ENCODE measurements at regions of chr2 and their contacts with region 1.

Region 1: DNA sequence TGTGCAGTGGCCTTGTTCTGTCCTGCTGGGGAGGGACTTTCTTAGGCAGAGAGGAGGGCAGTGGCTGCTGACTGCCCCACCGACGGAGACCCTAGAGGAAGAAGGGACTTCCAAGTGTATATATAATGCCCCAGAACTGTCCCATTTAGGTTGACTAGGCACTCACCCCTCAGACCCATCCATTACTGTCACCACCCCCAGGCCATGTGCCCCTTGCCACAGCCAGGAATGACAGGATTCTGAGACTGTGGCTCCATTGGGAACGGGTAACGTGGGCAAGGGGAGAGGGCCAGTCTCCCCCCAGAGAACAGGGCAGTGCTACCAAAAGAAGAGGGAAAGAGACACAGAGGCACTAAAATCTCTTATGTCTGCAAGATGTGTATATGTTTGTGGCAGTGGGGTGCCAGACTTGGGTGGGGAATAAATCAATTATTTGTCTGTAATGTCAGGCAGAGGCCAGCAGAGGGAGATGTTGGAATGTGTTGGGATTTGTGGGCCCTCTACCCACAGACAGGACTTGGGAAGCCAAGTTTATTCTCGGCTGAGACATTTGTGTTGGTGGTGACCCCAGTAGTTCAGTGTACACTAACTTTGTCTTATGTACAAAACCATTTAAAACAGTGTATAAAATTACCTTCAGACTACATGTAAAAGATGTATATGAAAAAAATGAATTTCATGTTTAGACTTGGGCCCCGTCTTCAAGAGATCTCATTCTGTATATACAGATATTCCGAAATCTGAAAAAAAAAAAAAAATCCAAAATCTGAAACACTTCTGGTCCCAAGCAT is 24.0 kb upstream of the TMEM37 start:
- DNase-seq: peak in 3 of 5 donors; percentile 28 to 55 (median 49)
- ATAC-seq: peak; percentile 32 to 78 (median 68)
- H3K4me3 ChIP-seq: no peak overlapping the region
- H3K27ac ChIP-seq: no peak overlapping the region
- H3K4me1 ChIP-seq: peaks cover 0 to 11% (median 6%) of the 10 kb centered on the region in 12 donors
- H3K27me3 ChIP-seq: no peaks in the 10 kb centered on the region
- CTCF ChIP-seq: peak; percentile 60 to 85 (median 79)
- POLR2A ChIP-seq: no peak

Region 2: DNA sequence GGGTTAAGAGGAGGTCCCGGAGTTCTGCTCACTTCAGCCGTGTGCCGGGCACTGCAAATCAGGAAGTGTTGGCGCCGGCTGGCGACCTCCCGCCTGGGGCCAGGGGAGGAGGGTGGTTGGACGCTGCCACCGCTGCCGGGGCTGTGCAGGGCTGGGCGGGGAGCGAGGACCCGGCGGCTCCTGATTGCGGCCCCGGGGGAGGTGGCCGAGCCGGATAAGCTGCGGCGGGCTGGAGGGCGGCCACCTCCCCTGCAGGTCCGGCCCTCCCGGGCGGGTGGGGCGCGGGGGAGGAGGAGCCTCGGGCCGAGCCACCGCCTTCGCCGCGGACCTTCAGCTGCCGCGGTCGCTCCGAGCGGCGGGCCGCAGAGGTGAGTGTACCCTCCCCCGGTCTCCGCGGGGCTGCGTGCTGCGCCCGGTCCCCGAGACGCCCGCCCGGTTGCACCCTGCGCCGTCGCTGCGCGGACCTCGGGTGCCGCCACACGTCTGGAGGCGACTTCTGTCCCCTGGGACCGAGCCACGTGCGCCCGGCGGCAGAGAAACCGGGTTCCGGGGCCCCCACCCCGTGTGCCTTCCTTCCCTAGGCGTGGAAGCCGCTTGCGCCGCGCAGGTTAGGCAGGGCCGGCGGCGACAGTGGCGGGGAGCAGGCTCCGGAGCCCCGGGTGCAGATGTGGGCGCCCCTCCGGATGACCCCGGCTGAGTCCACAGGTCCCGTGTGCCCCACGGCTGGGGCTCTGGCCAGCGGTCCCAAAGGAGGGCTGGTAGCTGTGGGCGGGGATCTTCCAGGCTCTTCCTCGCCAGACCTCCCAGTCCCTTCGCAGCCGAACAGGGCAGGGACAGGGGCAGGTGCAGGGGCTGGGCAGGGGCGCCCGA is 183.9 kb before region 1 on chr2 and contains the start of gene STEAP3:
- intact Hi-C with region 1: loop called in 1 of 10 experiments (anchors 10 kb)
- DNase-seq: peak; percentile 80 to 90 (median 88)
- ATAC-seq: peak; percentile 75 to 96 (median 94)
- H3K4me3 ChIP-seq: peak within 1 kb of the TSS; percentile 50 to 81 (median 70)
- H3K27ac ChIP-seq: peak within 1 kb of the TSS in 8 of 12 donors; percentile 24 to 70 (median 52)
- H3K4me1 ChIP-seq: peaks cover 0 to 26% (median 12%) of the 10 kb centered on the region in 12 donors
- H3K27me3 ChIP-seq: peaks cover 0 to 5% (median 0%) of the 10 kb centered on the region in 9 donors
- CTCF ChIP-seq: peak in 1 of 12 donors; percentile 12
- POLR2A ChIP-seq: peak in 1 of 2 donors; percentile 57
- total RNA-seq, gene STEAP3: 6.9 to 38.5 (median 12.2) TPM

Region 3: DNA sequence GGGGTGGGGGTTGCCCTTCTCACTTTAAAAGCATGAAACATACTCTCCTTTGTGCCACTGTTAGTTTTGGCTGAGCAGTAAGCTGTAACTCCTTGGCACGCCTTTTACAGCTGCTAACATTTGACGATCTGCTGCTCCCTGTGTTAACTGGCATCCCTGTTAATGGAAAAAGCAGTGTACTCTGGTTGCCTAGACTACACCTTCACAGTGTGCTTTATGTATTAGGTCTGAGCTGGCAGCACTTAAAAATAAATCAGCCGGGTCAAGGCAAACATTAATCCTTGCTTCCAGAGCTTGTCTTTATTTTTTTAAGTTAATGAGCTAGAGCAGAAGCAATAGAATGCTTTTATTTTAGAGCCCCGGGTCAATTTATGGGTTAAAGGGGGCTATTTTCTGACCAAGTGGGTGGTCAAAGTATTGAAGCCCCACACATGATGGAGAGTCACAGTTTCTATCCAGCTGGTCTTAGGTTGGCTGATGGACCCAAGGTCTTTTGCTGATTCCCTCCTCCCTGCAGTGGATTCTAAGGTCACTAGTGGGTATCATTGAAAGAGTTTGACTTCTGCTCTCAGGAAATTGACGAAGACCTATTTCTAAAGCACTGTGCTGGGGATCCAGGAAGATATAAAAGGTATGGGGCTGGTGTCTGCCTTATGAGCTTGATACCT is 191.1 kb after region 1 on chr2:
- intact Hi-C with region 1: loop called in 1 of 10 experiments (anchors 10 kb)
- DNase-seq: no peak
- ATAC-seq: peak; percentile 73 to 88 (median 76)
- H3K4me3 ChIP-seq: no peak overlapping the region
- H3K27ac ChIP-seq: peak overlapping the region in 8 of 12 donors; percentile 29 to 82 (median 64)
- H3K4me1 ChIP-seq: peaks cover 0 to 36% (median 2%) of the 10 kb centered on the region in 12 donors
- H3K27me3 ChIP-seq: no peaks in the 10 kb centered on the region
- CTCF ChIP-seq: no peak
- POLR2A ChIP-seq: no peak

Region 4: GRCh38 chr2:119641562-119642258 is 234.1 kb after region 1 on chr2:
- intact Hi-C with region 1: loop called in 1 of 10 experiments (anchors 5 kb)
- DNase-seq: peak; percentile 56 to 74 (median 66)
- ATAC-seq: peak; percentile 56 to 94 (median 88)
- H3K4me3 ChIP-seq: no peak overlapping the region
- H3K27ac ChIP-seq: no peak overlapping the region
- H3K4me1 ChIP-seq: peaks cover 0 to 14% (median 8%) of the 10 kb centered on the region in 12 donors
- H3K27me3 ChIP-seq: peaks cover 0 to 6% (median 0%) of the 10 kb centered on the region in 9 donors
- CTCF ChIP-seq: peak; percentile 86 to 95 (median 92)
- POLR2A ChIP-seq: no peak

Region 5: DNA sequence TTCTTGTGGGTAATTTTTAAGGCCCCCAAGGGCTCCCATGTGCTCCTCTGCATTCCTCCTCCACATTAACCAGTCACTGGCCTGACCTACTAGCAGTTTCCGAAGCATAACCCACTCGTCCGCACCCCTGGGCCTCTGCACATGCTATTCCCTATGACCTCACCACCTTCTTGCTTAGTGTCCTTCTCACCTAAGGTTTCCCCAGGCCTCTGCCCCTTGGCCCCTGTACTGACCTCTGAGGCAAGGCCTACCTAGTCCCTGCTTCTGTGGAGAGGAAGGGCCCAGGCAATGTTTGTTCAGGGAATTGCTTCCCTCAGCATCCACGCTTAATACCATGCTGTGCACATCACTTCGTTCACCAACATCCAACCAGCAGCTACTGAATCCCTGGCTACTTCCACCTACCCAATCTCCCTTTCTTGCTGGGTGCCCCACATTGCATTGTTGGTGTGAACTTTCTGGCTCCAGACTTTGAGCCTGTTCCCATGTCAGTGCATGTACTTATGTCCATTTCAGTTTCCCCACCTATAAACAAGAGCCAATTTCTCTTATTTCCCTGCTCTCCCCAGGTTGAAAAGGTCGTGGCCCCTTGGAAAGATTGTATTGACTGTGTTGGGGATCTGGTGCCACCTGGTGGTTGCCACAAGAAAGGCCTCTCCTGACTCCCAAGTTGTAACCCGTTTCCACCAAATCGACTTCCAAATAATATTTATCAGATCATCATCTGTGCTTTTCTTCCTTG is 252.1 kb after region 1 on chr2:
- intact Hi-C with region 1: loop called (anchors 1 to 10 kb)
- DNase-seq: peak in 2 of 5 donors; percentile 25 to 43
- ATAC-seq: peak in 2 of 4 donors; percentile 36 to 43
- H3K4me3 ChIP-seq: no peak overlapping the region
- H3K27ac ChIP-seq: no peak overlapping the region
- H3K4me1 ChIP-seq: peaks cover 0 to 7% (median 0%) of the 10 kb centered on the region in 12 donors
- H3K27me3 ChIP-seq: no peaks in the 10 kb centered on the region
- CTCF ChIP-seq: peak; percentile 76 to 89 (median 83)
- POLR2A ChIP-seq: no peak

Measured in heart left ventricle (tissue), 16 donors.